Dendritic cell treated with granulocyte-macrophage colony-stimulating factor and Interleukin-4, amounts not matched to agents 40 ng/mL and 50 ng/mL, for 4 days (primary cell): ENCODE measurements at regions of chrX and their contacts with region 1.

Region 1: DNA sequence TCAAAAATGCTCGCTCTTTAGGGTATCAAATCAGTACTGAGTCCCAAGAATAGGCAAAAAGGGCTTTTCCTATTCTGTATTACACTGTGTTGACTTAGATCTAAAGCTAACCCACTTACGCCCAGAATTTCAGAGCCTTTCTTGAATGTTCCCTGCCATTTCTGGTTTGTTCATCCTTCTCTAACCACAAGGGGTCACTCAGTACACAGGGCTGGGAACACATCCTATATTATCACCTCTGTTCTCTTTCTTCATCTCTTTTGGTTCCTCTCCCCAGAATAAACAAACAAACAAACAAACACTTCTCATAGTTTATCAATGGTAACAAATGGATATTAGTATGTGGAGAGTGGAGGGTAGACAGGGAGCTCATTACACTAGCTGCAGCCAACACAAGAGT is 25.5 kb upstream of the MORC4 start:
- H3K4me3 Mint-ChIP-seq: no peak overlapping the region
- H3K27ac Mint-ChIP-seq: no peak overlapping the region
- H3K4me1 Mint-ChIP-seq: no peaks in the 10 kb centered on the region
- H3K27me3 Mint-ChIP-seq: no peaks in the 10 kb centered on the region

Region 2: GRCh38 chrX:107429090-107429489 is 403.5 kb after region 1 on chrX:
- intact Hi-C with region 1: loop called (anchors 5 kb)
- H3K4me3 Mint-ChIP-seq: no peak overlapping the region
- H3K27ac Mint-ChIP-seq: no peak overlapping the region
- H3K4me1 Mint-ChIP-seq: no peaks in the 10 kb centered on the region
- H3K27me3 Mint-ChIP-seq: no peaks in the 10 kb centered on the region